ENCODE measurements at regions of chr1 and their contacts with region 1.

Region 1: GRCh38 chr1:16621300-16621658 is 7.9 kb upstream of the NBPF1 start:
- DNase-seq: no peak
- H3K4me3 Mint-ChIP-seq: no peak overlapping the region
- H3K27ac Mint-ChIP-seq: no peak overlapping the region
- H3K4me1 Mint-ChIP-seq: no peaks in the 10 kb centered on the region
- H3K27me3 Mint-ChIP-seq: no peaks in the 10 kb centered on the region

Region 2: GRCh38 chr1:16607433-16607851 is 13.8 kb before region 1 on chr1:
- CTCF ChIA-PET with region 1: interaction called, 20 read pairs
- DNase-seq: no peak
- H3K4me3 Mint-ChIP-seq: no peak overlapping the region
- H3K27ac Mint-ChIP-seq: no peak overlapping the region
- H3K4me1 Mint-ChIP-seq: no peaks in the 10 kb centered on the region
- H3K27me3 Mint-ChIP-seq: no peaks in the 10 kb centered on the region

Measured in activated naive CD4-positive, alpha-beta T cell treated with anti-CD3 and anti-CD28 coated beads, Interleukin-2, amount 10 ng/mL, durations not matched to agents 7 days and 5 days (primary cell).